Heart left ventricle (tissue), 16 donors: ENCODE measurements at regions of chr6 and their contacts with region 1.

Region 1: DNA sequence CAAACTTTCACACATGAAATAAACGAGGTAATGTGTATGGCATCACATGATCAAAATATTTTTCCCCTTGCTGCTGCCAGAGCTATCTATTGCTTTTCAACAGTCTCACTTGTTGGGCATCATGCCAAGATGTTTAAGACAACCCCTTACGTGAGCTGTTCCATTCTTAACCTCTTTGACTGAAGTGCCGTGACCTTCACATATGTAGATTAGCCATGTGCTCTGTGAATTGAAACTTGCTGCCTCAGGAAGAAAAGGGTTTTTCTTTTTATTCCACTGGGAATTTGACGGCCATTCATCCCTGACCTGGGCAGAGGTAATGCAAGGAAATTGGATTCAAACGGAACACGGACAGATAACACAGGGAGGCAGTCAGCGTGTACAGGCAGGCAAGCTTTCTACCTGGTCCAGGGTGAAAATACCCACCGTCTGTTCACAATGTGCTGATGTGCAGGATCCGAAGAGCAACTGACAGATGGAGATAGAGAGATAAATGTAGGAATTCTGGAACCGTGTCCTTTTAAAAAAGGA is 14.2 kb downstream of the ARID1B start:
- DNase-seq: peak in 1 of 5 donors; percentile 27
- ATAC-seq: peak; percentile 29 to 82 (median 74)
- H3K4me3 ChIP-seq: no peak overlapping the region
- H3K27ac ChIP-seq: peak overlapping the region in 6 of 12 donors; percentile 2 to 41 (median 34)
- H3K4me1 ChIP-seq: peaks cover 5 to 100% (median 85%) of the 10 kb centered on the region in 12 donors
- H3K27me3 ChIP-seq: no peaks in the 10 kb centered on the region
- CTCF ChIP-seq: no peak
- POLR2A ChIP-seq: no peak

Region 2: GRCh38 chr6:156822747-156823206 is 31.4 kb after region 1 on chr6:
- intact Hi-C with region 1: loop called in 2 of 10 experiments (anchors 5 kb)
- DNase-seq: no peak
- ATAC-seq: peak; percentile 65 to 74 (median 68)
- H3K4me3 ChIP-seq: no peak overlapping the region
- H3K27ac ChIP-seq: peak overlapping the region in 8 of 12 donors; percentile 14 to 50 (median 31)
- H3K4me1 ChIP-seq: peaks cover 0 to 95% (median 52%) of the 10 kb centered on the region in 12 donors
- H3K27me3 ChIP-seq: no peaks in the 10 kb centered on the region
- CTCF ChIP-seq: no peak
- POLR2A ChIP-seq: no peak

Region 3: DNA sequence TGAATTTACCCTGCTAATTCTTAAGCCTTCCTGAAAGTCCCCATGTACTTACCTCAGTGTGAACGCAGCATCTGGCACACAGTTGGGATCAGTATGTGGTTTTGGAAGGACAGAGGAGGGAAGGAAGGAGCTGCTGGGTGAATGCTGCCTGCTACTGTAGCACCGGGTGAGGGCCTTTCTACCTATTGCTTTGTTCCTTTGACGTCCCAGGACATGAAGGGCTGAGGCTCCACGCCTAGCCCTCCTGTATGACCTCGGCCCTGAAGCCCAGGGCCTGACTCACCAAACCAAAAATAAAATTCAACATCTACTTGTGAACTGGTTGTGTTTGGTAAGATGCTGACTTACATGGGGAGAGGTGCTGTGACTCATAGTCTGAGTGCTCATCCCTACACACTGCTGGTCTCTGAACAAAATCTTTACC is 36.9 kb after region 1 on chr6:
- intact Hi-C with region 1: loop called in 2 of 10 experiments (anchors 5 kb)
- DNase-seq: peak in 2 of 5 donors; percentile 39 to 62
- ATAC-seq: peak; percentile 78 to 93 (median 86)
- H3K4me3 ChIP-seq: no peak overlapping the region
- H3K27ac ChIP-seq: peak overlapping the region; percentile 24 to 76 (median 60)
- H3K4me1 ChIP-seq: peaks cover 0 to 85% (median 59%) of the 10 kb centered on the region in 12 donors
- H3K27me3 ChIP-seq: no peaks in the 10 kb centered on the region
- CTCF ChIP-seq: no peak
- POLR2A ChIP-seq: no peak

Region 4: GRCh38 chr6:156839591-156840001 is 48.2 kb after region 1 on chr6:
- intact Hi-C with region 1: loop called in 3 of 10 experiments (anchors 5 to 10 kb)
- DNase-seq: peak in 4 of 5 donors; percentile 31 to 65 (median 52)
- ATAC-seq: peak; percentile 68 to 93 (median 84)
- H3K4me3 ChIP-seq: peak overlapping the region in 5 of 12 donors; percentile 0 to 28 (median 9)
- H3K27ac ChIP-seq: peak overlapping the region in 11 of 12 donors; percentile 17 to 62 (median 56)
- H3K4me1 ChIP-seq: peaks cover 0 to 75% (median 57%) of the 10 kb centered on the region in 12 donors
- H3K27me3 ChIP-seq: no peaks in the 10 kb centered on the region
- CTCF ChIP-seq: no peak
- POLR2A ChIP-seq: no peak